GM10248 (cell line): ENCODE measurements at regions of chr16 and their contacts with region 1.

Region 1: DNA sequence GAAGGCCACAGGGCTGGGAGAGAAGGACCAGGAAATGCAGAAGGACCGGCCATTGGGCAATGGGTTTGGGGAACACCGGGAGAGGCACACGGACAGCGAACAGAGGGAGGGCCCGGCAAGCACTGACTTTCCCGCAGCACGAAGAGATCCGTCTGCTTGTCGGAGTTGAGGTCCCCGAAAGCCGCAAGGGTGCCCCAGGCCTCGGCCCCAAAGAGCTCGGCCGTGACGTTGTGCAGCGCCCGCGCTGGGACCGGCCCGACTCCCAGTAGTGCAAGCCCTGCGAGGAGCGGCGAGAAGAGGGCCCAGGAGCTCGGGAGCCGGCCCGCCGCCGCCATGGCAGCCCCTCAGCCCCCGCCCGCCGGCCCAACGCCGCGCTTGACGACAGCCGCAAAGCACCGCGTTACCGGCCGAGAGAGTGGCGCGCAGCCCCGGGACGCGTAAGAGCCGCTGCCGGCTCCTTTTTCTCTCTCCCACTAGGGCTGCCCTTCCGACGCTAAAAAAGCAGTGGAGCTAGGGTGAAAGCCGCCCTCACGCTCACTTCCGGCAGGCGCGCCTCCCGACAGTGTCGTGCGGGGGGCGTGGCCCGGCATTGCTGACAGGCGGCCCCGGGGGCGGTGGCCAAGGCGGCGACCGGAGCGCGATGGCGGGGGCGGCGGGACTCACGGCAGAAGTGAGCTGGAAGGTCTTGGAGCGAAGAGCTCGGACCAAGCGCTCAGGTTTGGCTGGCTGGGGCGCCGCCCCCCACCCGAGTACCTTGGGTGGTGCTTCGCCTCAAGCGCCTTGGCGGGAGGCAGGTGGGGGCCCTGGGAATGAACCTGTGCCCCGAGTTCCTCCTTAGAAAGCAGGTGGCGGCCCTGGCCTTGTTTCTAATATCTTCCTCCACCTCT is at the starts of genes ITFG1 and PHKB:
- DNase-seq: peak; percentile 93
- CTCF ChIP-seq: no peak

Region 2: GRCh38 chr16:47473792-47474191 is 12.8 kb after region 1 on chr16:
- CTCF ChIA-PET with region 1: interaction called, 6 read pairs
- POLR2A ChIA-PET with region 1: interaction called, 13 read pairs
- DNase-seq: no peak
- CTCF ChIP-seq: no peak